ENCODE measurements at regions of chr1 and their contacts with region 1.

Region 1: GRCh38 chr1:199029855-199030254 is 391.0 kb downstream of the PTPRC start:
- DNase-seq: no peak
- ATAC-seq: no peak
- H3K4me3 ChIP-seq: no peak overlapping the region
- H3K27ac ChIP-seq: no peak overlapping the region
- H3K4me1 ChIP-seq: no peaks in the 10 kb centered on the region
- H3K27me3 ChIP-seq: no peaks in the 10 kb centered on the region
- CTCF ChIP-seq: no peak
- EP300 ChIP-seq: no peak
- POLR2A ChIP-seq: no peak
- RAD21 ChIP-seq: no peak

Region 2: GRCh38 chr1:199018471-199019135 is 11.3 kb before region 1 on chr1:
- CTCF ChIA-PET with region 1: interaction called, 12 read pairs
- POLR2A ChIA-PET with region 1: no interaction called
- RAD21 ChIA-PET with region 1: interaction called, 4 read pairs
- SMC1A ChIA-PET with region 1: interaction called, 7 read pairs
- in situ Hi-C with region 1: no loop called
- intact Hi-C with region 1: no loop called
- DNase-seq: no peak
- ATAC-seq: no peak
- H3K4me3 ChIP-seq: no peak overlapping the region
- H3K27ac ChIP-seq: no peak overlapping the region
- H3K4me1 ChIP-seq: no peaks in the 10 kb centered on the region
- H3K27me3 ChIP-seq: no peaks in the 10 kb centered on the region
- CTCF ChIP-seq: no peak
- EP300 ChIP-seq: no peak
- POLR2A ChIP-seq: no peak
- RAD21 ChIP-seq: no peak

Region 3: GRCh38 chr1:199619221-199619620 is 589.4 kb after region 1 on chr1:
- CTCF ChIA-PET with region 1: no interaction called
- POLR2A ChIA-PET with region 1: no interaction called
- RAD21 ChIA-PET with region 1: no interaction called
- SMC1A ChIA-PET with region 1: no interaction called
- in situ Hi-C with region 1: no loop called
- intact Hi-C with region 1: no loop called
- DNase-seq: no peak
- ATAC-seq: no peak
- H3K4me3 ChIP-seq: no peak overlapping the region
- H3K27ac ChIP-seq: no peak overlapping the region
- H3K4me1 ChIP-seq: no peaks in the 10 kb centered on the region
- H3K27me3 ChIP-seq: no peaks in the 10 kb centered on the region; a peak in 2 of 4 replicates
- CTCF ChIP-seq: no peak
- EP300 ChIP-seq: no peak
- POLR2A ChIP-seq: no peak
- RAD21 ChIP-seq: no peak

Measured in GM12878 (cell line).